MCF 10A (cell line): ENCODE measurements at regions of chr1 and their contacts with region 1.

Region 1: GRCh38 chr1:203512830-203513611 is 19.1 kb downstream of the OPTC start:
- DNase-seq: peak; percentile 96
- H3K4me3 Mint-ChIP-seq: peak overlapping the region; percentile 47
- H3K27ac Mint-ChIP-seq: peak overlapping the region; percentile 93
- H3K4me1 Mint-ChIP-seq: peaks cover 45% of the 10 kb centered on the region
- H3K27me3 Mint-ChIP-seq: no peaks in the 10 kb centered on the region
- CTCF ChIP-seq: no peak

Region 2: GRCh38 chr1:203526572-203526971 is 13.6 kb after region 1 on chr1:
- CTCF ChIA-PET with region 1: interaction called, 3 read pairs
- POLR2A ChIA-PET with region 1: interaction called, 19 read pairs
- intact Hi-C with region 1: loop called (anchors 1 kb)
- DNase-seq: peak; percentile 60
- H3K4me3 Mint-ChIP-seq: no peak overlapping the region
- H3K27ac Mint-ChIP-seq: no peak overlapping the region
- H3K4me1 Mint-ChIP-seq: peaks cover 19% of the 10 kb centered on the region
- H3K27me3 Mint-ChIP-seq: no peaks in the 10 kb centered on the region
- CTCF ChIP-seq: no peak

Region 3: DNA sequence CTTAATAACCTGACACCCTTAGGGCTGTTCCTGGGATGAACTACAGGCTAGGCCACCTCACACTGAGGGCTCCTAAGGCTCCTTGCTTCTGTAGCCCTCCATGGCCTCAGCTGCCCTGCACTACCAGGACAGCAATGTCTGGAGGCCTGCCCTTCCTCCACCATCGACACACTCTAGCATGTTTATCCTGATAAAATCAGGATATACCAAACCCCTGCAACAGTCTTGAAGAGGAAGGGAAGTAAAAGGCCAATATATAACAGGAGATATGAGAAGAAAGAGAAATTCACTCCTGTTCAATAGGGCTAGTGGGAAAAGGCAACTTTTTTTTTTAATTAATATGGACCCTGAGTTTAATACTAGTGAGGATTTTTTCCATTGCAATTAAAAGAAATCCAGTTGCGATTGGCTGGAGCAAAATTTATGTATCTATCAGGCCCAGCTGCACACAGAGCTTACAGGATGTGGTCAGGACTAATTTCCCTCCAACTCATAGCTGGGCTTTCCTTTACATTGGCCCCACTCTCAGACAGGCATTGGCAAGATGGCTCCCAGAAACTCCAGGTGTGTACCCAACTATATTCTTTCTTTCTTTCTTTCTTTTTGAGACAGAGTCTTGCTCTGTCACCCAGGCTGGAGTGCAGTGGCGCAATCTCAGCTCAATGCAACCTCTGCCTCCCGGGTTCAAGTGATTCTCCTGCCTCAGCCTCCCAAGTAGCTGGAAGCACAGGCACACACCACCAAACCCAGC is 100.1 kb after region 1 on chr1:
- CTCF ChIA-PET with region 1: no interaction called
- POLR2A ChIA-PET with region 1: interaction called, 4 read pairs
- intact Hi-C with region 1: loop called (anchors 5 kb)
- DNase-seq: no peak
- H3K4me3 Mint-ChIP-seq: no peak overlapping the region
- H3K27ac Mint-ChIP-seq: no peak overlapping the region
- H3K4me1 Mint-ChIP-seq: no peaks in the 10 kb centered on the region
- H3K27me3 Mint-ChIP-seq: no peaks in the 10 kb centered on the region
- CTCF ChIP-seq: no peak